Activated CD8-positive, alpha-beta T cell treated with anti-CD3 and anti-CD28 coated beads for 36 hours (primary cell): ENCODE measurements at regions of chr3 and their contacts with region 1.

Region 1: DNA sequence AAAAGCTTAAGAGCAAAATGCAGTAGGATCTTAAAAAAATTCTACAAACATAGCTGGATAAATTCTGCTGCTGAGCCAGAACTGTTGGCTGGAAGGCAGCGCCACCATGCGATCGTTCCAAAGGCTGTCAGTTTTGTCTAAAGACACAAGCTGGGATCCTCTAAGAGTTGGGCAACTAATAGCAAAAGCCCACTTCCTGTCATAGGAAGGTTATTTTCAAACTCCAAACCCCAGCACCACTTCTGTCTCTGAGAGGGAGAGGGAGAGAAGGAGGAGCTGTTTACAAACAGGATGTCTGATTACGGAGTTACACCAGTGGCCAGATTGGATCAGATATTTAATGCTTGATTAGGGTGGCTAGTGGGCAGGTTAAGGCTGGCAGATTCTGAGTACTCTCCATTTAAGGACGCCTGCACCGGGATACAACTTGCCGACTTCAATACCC is 44.0 kb downstream of the EIF4E3 start:
- DNase-seq: peak; percentile 74
- ATAC-seq: peak; percentile 84
- H3K4me3 Mint-ChIP-seq: no peak overlapping the region
- H3K27ac Mint-ChIP-seq: no peak overlapping the region
- H3K4me1 Mint-ChIP-seq: peaks cover 8% of the 10 kb centered on the region
- H3K27me3 Mint-ChIP-seq: no peaks in the 10 kb centered on the region
- CTCF ChIP-seq: peak; percentile 63

Region 2: GRCh38 chr3:71662568-71662967 is 18.7 kb before region 1 on chr3:
- CTCF ChIA-PET with region 1: interaction called, 12 read pairs
- POLR2A ChIA-PET with region 1: no interaction called
- intact Hi-C with region 1: no loop called
- DNase-seq: no peak
- ATAC-seq: no peak
- H3K4me3 Mint-ChIP-seq: no peak overlapping the region
- H3K27ac Mint-ChIP-seq: no peak overlapping the region
- H3K4me1 Mint-ChIP-seq: peaks cover 38% of the 10 kb centered on the region
- H3K27me3 Mint-ChIP-seq: no peaks in the 10 kb centered on the region
- CTCF ChIP-seq: no peak

Region 3: GRCh38 chr3:71694358-71694999 is 13.2 kb after region 1 on chr3:
- CTCF ChIA-PET with region 1: interaction called, 12 read pairs
- POLR2A ChIA-PET with region 1: no interaction called
- intact Hi-C with region 1: no loop called
- DNase-seq: no peak
- ATAC-seq: no peak
- H3K4me3 Mint-ChIP-seq: no peak overlapping the region
- H3K27ac Mint-ChIP-seq: no peak overlapping the region
- H3K4me1 Mint-ChIP-seq: peaks cover 2% of the 10 kb centered on the region
- H3K27me3 Mint-ChIP-seq: no peaks in the 10 kb centered on the region
- CTCF ChIP-seq: no peak

Region 4: DNA sequence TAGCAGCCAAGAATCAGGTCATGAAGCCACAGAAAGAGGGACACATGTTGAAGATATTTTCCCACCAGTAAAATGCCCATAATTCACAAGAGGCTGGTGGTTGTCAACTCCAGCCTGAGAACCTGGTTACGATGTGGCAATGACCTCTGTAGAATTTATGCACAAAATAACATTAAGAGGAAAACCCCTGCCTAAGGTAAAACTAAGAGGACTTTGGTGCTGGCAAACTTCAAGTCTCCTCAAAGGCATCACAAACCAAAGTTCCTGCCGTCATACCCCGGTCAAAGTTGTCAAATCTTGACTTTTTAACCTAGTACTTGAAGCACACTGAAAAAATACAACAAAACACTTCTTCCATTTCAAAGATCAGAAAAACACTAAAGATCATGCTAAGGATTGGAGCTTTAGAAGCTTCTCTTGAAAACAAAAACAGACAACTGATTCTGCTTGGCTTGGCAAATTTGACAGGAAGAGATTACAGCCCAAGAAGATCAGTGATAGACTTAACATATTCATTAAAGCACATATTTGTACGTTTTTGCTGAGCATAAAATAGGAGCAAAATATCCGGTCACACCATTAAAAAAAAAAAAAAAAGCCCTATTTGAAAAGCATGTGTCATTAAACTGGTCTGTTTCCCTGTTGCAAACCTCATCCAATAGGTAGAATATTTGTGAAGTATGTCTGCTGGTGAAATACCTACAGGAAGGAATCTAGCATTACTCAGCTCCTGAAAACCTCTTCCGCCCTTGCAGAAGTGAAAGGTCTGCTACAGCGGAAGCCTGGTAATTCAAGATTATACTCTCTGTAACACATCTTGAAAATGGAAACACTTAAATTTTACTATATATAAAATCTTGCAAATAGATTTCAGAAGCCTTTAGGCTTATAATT is 21.1 kb after region 1 on chr3:
- CTCF ChIA-PET with region 1: interaction called, 13 read pairs
- POLR2A ChIA-PET with region 1: no interaction called
- intact Hi-C with region 1: no loop called
- DNase-seq: peak; percentile 59
- ATAC-seq: peak; percentile 91
- H3K4me3 Mint-ChIP-seq: peak overlapping the region; percentile 65
- H3K27ac Mint-ChIP-seq: peak overlapping the region; percentile 93
- H3K4me1 Mint-ChIP-seq: peaks cover 63% of the 10 kb centered on the region
- H3K27me3 Mint-ChIP-seq: no peaks in the 10 kb centered on the region
- CTCF ChIP-seq: no peak